Left ventricle myocardium superior (tissue), 1 donor: ENCODE measurements at regions of chr4 and their contacts with region 1.

Region 1: DNA sequence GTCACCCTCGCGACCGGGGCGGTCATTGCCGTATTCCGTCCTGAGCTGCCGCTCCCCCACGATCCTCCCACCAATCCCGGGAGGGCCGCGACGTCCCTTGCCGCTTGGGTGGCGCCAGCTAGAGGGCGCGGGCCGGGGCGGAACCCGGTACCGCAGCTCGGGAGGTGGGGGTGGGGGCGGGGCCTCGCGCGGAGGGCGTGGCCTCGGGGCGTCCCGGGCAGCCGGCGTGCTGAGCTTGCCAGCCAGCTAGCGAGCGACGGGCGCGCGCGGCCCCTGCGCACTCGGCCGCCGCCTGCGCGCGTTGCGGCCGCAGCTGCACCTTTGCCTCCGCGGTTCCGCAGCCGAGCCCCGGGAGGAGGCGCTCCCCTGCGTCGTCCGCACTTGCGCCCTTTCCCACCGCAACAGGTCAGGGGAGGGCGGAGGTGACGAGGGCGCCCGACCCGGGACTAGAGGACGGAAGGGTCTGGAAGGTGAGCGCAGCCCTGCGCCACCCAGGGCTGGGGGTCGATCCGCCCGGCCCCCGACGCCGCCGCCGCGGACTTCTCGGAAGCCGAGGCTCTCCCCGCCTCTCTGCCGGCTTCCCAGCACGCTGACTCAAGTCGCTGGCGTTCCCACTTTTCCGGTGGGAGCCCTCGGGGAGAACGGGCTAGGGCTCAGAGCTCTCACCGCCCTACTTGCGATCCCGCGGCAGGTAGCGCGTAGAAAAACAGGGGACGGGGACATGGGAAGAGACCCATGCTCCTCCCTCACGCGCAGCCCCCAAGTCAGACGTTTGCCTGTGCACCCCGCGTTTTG is at the start of gene AFF1:
- DNase-seq: peak; percentile 96
- ATAC-seq: peak; percentile 94
- total RNA-seq, gene AFF1: 77.8 TPM

Region 2: GRCh38 chr4:86302251-86302650 is 632.7 kb before region 1 on chr4:
- intact Hi-C with region 1: no loop called
- DNase-seq: no peak
- ATAC-seq: peak; percentile 80

Region 3: GRCh38 chr4:86338989-86339388 is 596.0 kb before region 1 on chr4:
- intact Hi-C with region 1: no loop called
- DNase-seq: no peak
- ATAC-seq: peak; percentile 81

Region 4: DNA sequence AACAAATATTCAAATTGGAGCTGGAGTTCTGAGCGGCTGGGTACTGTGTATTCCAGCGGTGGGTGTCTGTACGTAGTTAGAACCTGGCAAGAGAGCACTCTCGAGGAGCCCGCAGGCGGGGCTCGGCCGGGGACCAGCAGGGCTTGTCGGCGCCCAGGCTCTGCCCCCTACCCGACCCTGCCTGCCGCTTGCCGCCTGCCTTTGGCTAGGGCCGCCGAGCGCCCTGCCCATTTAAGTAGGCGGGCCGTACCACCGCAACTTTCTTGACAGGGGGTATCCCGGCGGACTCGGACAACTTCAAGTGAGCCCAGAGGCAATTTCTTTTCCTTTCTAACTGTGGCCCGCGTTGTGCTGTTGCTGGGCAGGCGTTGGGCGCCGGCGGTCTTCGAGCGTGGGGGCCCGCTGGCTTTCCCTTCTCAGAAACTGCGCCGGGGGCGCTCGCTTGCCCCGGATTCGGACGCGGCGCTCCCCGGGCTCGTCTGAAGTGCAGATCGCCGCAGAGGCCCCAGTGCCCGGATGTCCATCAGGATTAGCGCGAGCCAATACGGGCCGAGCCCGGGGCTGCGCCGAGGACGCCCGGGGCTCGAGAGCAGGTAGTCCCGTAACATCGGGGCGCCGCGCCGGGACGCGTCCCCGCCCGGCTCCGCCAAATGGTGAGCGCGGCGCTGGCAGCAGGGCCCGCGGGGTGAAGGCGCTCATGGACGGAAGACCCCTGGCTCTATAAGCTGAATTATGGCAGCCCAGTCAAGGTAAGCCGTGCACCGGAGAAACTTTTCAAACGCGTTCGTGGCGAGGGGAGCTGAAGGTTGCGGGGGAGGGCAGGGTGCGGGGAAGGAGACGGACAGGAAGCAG is 71.9 kb after region 1 on chr4:
- intact Hi-C with region 1: loop called (anchors 5 kb)
- DNase-seq: peak; percentile 96
- ATAC-seq: peak; percentile 94

Region 5: GRCh38 chr4:87555773-87556619 is 621.0 kb after region 1 on chr4:
- intact Hi-C with region 1: no loop called
- DNase-seq: no peak
- ATAC-seq: no peak